Endothelial cell of umbilical vein (primary cell): ENCODE measurements at regions of chr5 and their contacts with region 1.

Region 1: DNA sequence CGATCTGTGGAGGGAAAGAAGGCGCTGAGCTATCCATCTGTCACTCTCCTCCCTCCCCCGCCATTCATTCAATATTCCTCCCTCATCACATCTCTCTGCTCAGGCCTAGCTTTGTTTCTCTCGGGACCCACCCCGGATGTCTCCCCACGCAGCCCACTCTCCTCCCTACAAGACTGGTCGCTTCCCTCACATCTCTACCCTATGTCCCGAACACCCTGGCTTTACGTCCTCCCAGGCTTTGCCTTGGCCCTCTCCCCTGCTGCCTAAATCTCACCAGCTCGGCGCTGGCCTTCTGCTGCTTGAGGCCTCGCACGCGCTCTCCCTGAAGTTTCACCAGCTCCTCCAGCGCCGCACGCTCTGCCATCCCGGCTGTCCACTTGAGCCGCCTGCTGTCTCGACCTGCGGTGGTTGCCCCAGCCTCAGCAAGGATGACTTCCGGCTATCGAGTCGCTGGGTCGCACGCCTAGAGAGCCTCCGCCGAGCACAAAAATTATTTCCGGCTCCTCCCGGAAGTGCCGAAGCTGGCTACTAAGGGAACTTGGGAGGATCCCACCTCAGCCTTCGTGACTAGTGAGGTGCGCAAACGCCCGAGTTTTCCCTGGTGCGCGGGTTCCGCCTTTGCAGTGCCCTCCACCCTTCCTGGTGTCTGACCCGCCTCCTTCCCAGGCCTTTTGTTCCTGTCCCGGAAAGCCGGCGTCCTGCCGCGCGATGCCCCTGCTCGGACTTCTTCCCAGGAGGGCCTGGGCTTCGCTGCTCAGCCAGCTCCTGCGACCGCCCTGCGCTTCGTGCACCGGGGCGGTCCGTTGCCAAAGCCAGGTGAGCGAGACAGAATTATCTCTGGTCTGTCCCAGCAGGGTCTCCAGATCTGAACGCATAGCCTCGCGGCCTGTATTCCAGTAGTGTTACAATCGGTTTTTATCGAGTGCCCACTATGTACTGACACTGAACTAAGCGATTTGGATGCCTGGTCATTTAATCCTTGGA is at the starts of genes HARS1 and HARS2:
- DNase-seq: peak; percentile 94
- H3K4me3 ChIP-seq: peak within 1 kb of the TSS; percentile 80 to 90 (median 82)
- H3K27ac ChIP-seq: peak within 1 kb of the TSS; percentile 72
- H3K4me1 ChIP-seq: peaks cover 13% of the 10 kb centered on the region
- H3K27me3 ChIP-seq: no peaks in the 10 kb centered on the region
- CTCF ChIP-seq: no peak
- POLR2A ChIP-seq: peak; percentile 90
- total RNA-seq, gene HARS1: 104 and 105 TPM in 2 replicates
- total RNA-seq, gene HARS2: 29.6 and 31.7 TPM in 2 replicates

Region 2: DNA sequence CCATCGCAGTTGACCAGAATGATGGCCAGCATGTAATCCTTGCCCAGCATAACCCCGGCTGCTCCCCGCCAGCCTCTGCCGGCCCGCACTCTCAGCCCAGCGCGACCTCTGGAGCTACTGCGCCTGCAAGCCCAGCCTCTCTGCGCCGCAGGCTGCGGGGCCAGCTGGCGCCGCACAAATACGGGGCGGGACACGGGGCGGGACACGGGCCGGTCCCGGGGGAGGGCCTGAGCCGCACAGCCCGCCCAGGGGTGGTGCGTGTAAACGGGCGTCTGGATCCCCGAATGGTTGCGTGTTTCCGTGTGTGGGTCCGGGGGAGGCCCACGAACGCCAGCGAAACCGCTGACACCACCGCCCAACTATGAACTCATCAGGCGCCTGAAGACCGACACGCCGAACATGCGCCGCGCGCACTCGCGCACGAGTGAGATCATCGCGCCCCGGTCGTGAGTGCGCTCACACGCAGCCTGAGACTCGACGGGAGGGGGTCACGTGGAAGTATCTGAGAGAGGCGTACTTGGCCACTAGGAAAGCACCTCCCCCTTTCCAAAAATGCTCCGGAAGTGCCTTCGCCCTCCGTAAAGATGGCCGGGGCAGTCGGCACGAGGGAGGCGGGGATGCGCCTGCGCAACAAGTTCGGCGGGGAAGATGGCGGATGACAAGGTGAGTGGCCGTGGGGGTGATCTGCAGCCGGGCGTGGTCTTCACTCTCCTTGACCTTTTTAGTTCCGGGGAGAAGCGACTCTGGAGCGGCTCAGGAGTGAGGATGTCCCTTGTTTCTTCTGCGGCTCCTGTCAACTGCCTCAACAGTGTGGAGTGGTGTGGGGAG is 126.8 kb before region 1 on chr5 and contains the starts of genes APBB3 and SLC35A4:
- CTCF ChIA-PET with region 1: interaction called, 3 read pairs
- POLR2A ChIA-PET with region 1: interaction called, 4 read pairs
- dilution Hi-C with region 1: no loop called
- intact Hi-C with region 1: loop called (anchors 1 kb)
- DNase-seq: peak; percentile 97
- H3K4me3 ChIP-seq: peak within 1 kb of the TSS; percentile 49 to 84 (median 73)
- H3K27ac ChIP-seq: peak within 1 kb of the TSS; percentile 65
- H3K4me1 ChIP-seq: peaks cover 8% of the 10 kb centered on the region
- H3K27me3 ChIP-seq: no peaks in the 10 kb centered on the region
- CTCF ChIP-seq: no peak
- POLR2A ChIP-seq: peak; percentile 83
- total RNA-seq, gene APBB3: 12.1 and 13.3 TPM in 2 replicates
- total RNA-seq, gene SLC35A4: 60.9 and 65.6 TPM in 2 replicates

Region 3: GRCh38 chr5:140647042-140647341 is 44.2 kb before region 1 on chr5:
- CTCF ChIA-PET with region 1: interaction called, 7 read pairs
- POLR2A ChIA-PET with region 1: interaction called, 3 read pairs
- dilution Hi-C with region 1: no loop called
- intact Hi-C with region 1: loop called (anchors 1 kb)
- DNase-seq: peak; percentile 10
- H3K4me3 ChIP-seq: peak overlapping the region; percentile 65 to 90 (median 76)
- H3K27ac ChIP-seq: peak overlapping the region; percentile 21
- H3K4me1 ChIP-seq: peaks cover 13% of the 10 kb centered on the region
- H3K27me3 ChIP-seq: no peaks in the 10 kb centered on the region
- CTCF ChIP-seq: no peak
- POLR2A ChIP-seq: no peak

Region 4: DNA sequence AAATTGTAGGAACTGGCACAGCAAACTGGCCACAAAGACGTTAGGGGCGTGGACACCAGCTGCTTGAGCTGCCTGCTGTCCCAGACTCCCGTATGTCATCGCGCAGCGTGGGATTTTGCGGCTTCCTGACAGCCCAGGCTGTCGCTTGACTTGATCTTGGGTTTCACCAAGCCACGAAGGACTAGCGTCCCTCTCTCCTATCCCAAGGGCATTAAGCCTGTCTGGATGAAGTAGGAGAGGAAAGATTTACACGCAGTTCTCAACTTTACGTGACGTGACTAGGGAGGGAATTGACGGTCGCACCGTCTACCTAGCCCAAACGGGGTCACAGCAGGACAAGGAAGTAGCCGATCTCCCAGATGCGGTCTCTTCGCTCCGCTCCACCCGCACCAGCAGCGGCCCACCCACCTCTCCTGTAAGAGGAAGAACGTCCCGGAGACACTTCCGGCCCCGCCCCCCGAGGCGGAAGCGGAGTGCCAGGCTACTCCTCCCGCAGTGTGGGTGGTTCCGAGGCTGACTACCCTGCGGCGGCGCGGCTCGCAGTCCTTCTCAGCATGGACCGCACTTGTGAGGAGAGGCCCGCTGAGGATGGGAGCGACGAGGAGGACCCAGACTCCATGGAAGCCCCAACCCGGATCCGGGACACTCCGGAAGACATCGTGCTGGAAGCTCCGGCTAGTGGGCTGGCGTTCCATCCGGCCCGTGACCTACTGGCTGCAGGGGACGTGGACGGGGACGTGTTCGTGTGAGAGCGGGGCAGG is 26.7 kb before region 1 on chr5 and contains the start of gene WDR55:
- CTCF ChIA-PET with region 1: interaction called, 3 read pairs
- POLR2A ChIA-PET with region 1: no interaction called
- dilution Hi-C with region 1: no loop called
- intact Hi-C with region 1: loop called (anchors 1 kb)
- DNase-seq: peak; percentile 88
- H3K4me3 ChIP-seq: peak within 1 kb of the TSS; percentile 73 to 93 (median 81)
- H3K27ac ChIP-seq: peak within 1 kb of the TSS; percentile 73
- H3K4me1 ChIP-seq: peaks cover 3% of the 10 kb centered on the region
- H3K27me3 ChIP-seq: no peaks in the 10 kb centered on the region
- CTCF ChIP-seq: no peak
- POLR2A ChIP-seq: peak; percentile 94
- total RNA-seq, gene WDR55: 24.0 and 25.3 TPM in 2 replicates

Region 5: DNA sequence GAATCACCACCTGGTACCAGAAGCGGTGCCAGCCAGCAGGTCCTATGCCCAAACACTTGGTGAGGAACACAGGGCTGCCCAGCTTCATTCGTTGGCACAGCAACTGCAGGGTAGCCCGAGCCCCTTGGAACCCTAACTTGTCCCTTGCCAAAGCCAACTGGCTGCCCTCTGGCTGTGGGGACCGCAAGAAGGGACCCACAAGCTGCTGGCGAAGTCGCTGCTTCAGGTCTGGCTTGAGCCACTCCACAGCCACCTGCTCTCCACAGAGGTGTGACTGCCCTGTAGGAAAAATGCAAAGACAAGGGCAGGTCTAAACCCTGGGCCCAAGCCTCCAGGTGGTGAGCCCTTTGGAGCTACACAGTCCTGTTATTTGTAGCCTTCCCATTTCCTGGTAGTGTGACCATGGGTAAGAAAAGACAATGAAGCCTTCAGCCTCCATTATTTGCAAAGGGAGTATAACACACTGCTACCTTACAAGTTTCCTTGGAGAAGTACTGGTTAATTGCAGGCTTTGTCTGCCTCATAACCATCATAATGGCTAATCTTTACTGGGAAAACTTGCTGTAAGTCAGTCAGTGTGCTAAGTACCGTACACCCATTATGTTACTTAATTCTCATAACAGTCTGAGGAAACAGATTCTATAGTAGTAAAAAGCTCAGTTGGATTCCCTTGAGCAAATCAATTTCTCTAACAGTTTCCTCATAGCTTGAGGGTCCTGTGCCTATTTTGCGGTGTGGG is 19.6 kb before region 1 on chr5:
- CTCF ChIA-PET with region 1: no interaction called
- POLR2A ChIA-PET with region 1: no interaction called
- dilution Hi-C with region 1: no loop called
- intact Hi-C with region 1: loop called (anchors 1 kb)
- DNase-seq: no peak
- H3K4me3 ChIP-seq: no peak overlapping the region
- H3K27ac ChIP-seq: no peak overlapping the region
- H3K4me1 ChIP-seq: peaks cover 3% of the 10 kb centered on the region
- H3K27me3 ChIP-seq: no peaks in the 10 kb centered on the region
- CTCF ChIP-seq: no peak
- POLR2A ChIP-seq: no peak

Region 6: DNA sequence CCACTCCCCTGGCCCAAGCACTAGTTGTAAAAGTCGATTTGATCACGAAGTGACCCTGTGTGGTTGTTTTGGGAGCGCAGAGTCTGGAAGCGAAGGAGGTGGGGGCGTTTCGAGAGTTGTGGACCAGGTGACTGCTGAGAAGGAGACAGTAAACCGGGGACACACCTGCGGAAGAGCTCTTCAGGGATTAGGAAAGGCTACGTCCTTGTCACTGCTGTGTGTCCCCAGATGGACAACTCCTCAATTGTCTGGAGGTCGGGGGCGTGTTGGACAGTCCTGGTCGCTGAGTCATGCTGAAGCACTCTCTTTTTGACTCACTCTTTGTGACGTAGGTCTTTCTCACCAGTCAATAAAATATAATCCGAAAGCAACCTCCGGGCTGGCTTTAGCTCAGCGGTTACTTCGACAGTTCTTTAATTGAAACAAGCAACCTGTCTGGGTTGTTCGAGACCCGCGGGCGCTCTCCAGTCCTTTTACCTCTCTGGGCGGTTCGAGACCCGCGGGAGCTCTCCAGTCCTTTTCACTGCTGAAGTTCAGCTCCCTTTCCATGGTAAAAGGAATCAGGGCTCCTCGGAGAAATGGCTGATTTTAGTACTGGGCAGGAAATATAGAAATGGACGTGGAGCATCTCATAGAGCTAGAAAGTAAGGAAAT is 19.8 kb after region 1 on chr5:
- CTCF ChIA-PET with region 1: no interaction called
- POLR2A ChIA-PET with region 1: interaction called, 4 read pairs
- dilution Hi-C with region 1: no loop called
- intact Hi-C with region 1: loop called (anchors 1 kb)
- DNase-seq: peak; percentile 100
- H3K4me3 ChIP-seq: peak overlapping the region; percentile 84 to 95 (median 93)
- H3K27ac ChIP-seq: peak overlapping the region; percentile 90
- H3K4me1 ChIP-seq: peaks cover 10% of the 10 kb centered on the region
- H3K27me3 ChIP-seq: no peaks in the 10 kb centered on the region
- CTCF ChIP-seq: no peak
- POLR2A ChIP-seq: no peak